Activated T-helper 2 cell treated with anti-CD3 and anti-CD28 coated beads, Interferon-gamma antibody, Interleukin-2, Interleukin-4, amounts not matched to agents 10 μg/mL and 5 μg/mL and 100 μg/mL, durations not matched to agents 14 hours and 24 hours and 36 hours (primary cell): ENCODE measurements at regions of chr10 and their contacts with region 1.

Region 1: DNA sequence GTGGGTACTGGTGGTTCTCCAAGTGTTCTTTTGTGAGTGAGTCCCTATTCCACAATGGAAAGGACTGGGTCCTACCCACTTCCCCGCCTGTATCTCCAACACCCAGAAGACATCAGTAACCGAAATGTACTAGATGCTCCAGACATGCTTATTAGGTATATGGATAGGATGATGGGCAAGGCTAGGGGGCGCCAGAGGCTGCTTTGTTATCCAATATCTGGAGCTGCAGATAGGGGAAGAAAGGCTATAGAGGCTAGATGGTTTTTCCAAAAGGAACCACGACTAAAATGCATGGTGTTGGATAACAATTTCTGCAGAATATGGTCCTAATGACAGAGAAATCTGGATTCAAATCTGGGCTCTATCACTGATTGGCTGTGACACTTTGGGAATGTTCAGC is 56.2 kb upstream of the TM9SF3 start:
- DNase-seq: peak; percentile 46
- H3K4me3 Mint-ChIP-seq: no peak overlapping the region
- H3K27ac Mint-ChIP-seq: no peak overlapping the region
- H3K4me1 Mint-ChIP-seq: peaks cover 19% of the 10 kb centered on the region
- H3K27me3 Mint-ChIP-seq: peaks cover 10% of the 10 kb centered on the region

Region 2: DNA sequence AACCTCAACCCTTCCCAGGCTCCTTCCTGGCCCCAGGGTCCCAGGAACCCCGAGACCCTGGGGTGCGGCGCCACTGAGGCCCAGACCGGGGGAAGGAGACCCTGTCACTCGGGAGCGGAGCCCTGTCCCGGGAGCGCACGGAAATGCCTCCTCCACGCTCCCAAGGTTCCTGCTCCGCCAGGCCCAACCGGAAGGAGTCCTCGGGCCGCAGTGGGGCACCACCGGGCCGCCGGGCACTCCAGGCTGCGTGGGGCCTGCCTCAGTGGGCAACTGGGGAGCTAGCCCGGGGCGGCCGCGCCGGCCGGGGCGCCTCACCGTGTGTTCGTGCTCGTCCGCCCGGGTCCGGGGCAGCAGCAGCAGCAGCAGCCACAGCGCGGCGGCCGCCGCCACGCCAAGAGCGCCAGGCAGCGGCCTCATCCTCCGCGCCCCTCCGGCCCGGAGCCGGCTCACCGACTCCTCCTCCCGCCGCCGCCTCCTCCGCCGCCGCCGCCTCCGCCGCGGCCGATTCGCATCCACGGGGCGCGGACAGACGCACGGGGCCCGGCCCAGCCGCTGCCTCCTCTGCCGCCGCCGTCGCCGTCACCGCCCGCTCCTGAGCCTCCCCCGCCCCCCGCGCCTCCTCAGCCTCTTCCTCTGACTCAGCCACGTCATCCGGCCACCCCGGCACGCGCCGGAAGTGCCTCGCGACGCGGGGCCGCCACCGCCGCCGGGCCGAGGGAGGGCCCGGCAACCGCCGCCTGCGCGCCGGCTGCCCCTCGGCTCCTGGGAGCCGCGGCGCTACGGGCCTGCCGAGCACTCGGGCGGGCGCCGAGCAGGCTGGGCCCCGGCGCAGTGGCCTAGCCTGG is 56.3 kb before region 1 on chr10 and contains the start of gene TM9SF3:
- intact Hi-C with region 1: loop called (anchors 5 kb)
- DNase-seq: peak; percentile 87
- H3K4me3 Mint-ChIP-seq: peak within 1 kb of the TSS; percentile 95
- H3K27ac Mint-ChIP-seq: peak within 1 kb of the TSS; percentile 88
- H3K4me1 Mint-ChIP-seq: peaks cover 29% of the 10 kb centered on the region
- H3K27me3 Mint-ChIP-seq: peaks cover 10% of the 10 kb centered on the region
- total RNA-seq, gene TM9SF3: 81.3 and 82.3 TPM in 2 replicates

Region 3: GRCh38 chr10:96618653-96619052 is 24.3 kb before region 1 on chr10:
- intact Hi-C with region 1: no loop called
- DNase-seq: no peak
- H3K4me3 Mint-ChIP-seq: no peak overlapping the region
- H3K27ac Mint-ChIP-seq: no peak overlapping the region
- H3K4me1 Mint-ChIP-seq: no peaks in the 10 kb centered on the region
- H3K27me3 Mint-ChIP-seq: no peaks in the 10 kb centered on the region

Region 4: DNA sequence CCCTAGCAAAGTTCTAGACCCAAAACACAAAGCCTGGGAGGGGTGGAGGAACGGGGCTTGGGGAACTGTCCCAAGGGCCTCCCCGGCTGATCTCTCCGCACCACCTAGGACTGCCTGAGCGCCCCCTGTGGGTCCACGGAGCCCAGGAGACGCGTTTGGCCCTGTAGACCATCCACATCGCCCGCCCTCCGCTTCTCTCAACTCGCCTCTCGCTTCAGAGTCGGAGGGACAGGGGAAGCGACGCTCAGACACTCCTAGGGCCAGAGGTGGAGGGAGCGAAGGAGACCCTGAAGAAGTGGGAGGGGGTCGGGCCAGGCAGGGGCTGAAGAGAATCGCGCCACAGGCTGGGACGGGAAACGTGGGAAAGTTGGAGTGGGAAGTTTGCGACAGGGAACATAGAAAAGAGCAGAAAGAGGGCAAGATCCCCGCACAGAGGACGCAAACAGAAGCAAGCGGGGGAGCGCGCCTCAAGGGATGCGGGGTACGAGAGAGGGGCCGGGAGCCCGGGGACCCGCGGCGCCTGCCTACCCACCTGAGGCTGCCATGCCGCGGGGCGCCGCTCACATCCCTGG is 77.0 kb after region 1 on chr10:
- intact Hi-C with region 1: loop called (anchors 1 kb)
- DNase-seq: peak; percentile 13
- H3K4me3 Mint-ChIP-seq: peak overlapping the region; percentile 91
- H3K27ac Mint-ChIP-seq: peak overlapping the region; percentile 74
- H3K4me1 Mint-ChIP-seq: peaks cover 30% of the 10 kb centered on the region
- H3K27me3 Mint-ChIP-seq: peaks cover 25% of the 10 kb centered on the region

Region 5: DNA sequence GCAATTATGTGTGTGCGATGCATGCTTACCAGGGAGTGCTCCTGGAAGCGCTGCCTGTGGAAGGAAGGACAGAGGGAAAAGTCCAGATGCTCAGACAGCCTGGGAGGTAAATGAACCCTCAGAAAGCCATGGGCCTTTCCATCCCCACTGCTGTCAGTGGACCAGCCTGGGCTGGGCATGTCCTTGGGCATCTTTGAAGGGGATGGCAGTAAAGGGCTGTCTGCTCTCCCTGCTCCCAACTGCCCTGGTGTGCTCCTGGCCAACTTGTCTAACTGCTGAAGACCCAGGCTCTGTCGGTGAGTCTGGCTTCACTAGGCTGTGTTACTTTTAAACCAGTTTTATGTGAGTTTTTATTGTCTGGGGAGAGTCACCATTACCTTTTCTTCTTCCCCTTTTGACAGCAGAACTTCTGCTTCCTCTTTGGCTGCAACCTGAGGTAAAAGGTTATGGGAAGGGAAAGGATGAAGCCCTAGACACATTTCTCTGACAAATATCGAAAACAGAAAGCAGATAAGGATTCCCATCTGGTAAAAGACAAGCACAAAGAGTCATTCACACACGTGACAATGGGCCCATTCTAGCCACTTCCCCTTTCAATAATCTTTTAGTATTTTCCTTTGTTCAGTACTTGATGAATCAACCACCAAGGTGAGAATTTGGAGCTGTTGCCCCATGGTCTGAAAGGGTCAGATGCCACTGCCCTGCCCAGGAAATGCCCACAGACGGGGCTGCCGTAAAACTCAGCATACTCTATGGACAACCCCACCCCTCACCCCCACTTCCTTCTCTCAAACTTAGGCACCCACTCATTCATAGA is 105.0 kb after region 1 on chr10:
- intact Hi-C with region 1: loop called (anchors 2 kb)
- DNase-seq: peak; percentile 20
- H3K4me3 Mint-ChIP-seq: peak overlapping the region; percentile 26
- H3K27ac Mint-ChIP-seq: peak overlapping the region; percentile 51
- H3K4me1 Mint-ChIP-seq: peaks cover 18% of the 10 kb centered on the region
- H3K27me3 Mint-ChIP-seq: peaks cover 19% of the 10 kb centered on the region

Region 6: GRCh38 chr10:96765406-96766240 is 122.7 kb after region 1 on chr10:
- intact Hi-C with region 1: loop called (anchors 5 kb)
- DNase-seq: peak; percentile 53
- H3K4me3 Mint-ChIP-seq: no peak overlapping the region
- H3K27ac Mint-ChIP-seq: no peak overlapping the region
- H3K4me1 Mint-ChIP-seq: no peaks in the 10 kb centered on the region
- H3K27me3 Mint-ChIP-seq: peaks cover 13% of the 10 kb centered on the region

Region 7: DNA sequence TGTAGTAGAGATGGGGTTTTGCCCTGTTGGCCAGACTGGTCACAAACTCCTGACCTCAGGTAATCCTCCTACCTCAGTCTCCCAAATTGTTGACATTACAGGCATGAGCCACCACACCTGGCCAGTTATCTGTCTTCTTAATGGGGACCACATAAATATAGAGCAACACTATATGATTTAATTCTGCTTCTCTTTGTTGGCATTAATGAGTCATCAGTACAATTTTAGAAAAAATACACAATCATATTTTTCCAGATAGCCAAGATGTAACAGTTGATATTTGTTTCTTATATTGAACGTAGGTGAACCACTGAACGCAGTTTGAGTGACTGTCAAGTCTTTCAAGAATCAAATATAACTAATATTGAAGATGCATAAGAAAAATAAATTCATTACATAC is 237.6 kb after region 1 on chr10:
- intact Hi-C with region 1: no loop called
- DNase-seq: no peak
- H3K4me3 Mint-ChIP-seq: no peak overlapping the region
- H3K27ac Mint-ChIP-seq: no peak overlapping the region
- H3K4me1 Mint-ChIP-seq: peaks cover 6% of the 10 kb centered on the region
- H3K27me3 Mint-ChIP-seq: no peaks in the 10 kb centered on the region

Region 8: DNA sequence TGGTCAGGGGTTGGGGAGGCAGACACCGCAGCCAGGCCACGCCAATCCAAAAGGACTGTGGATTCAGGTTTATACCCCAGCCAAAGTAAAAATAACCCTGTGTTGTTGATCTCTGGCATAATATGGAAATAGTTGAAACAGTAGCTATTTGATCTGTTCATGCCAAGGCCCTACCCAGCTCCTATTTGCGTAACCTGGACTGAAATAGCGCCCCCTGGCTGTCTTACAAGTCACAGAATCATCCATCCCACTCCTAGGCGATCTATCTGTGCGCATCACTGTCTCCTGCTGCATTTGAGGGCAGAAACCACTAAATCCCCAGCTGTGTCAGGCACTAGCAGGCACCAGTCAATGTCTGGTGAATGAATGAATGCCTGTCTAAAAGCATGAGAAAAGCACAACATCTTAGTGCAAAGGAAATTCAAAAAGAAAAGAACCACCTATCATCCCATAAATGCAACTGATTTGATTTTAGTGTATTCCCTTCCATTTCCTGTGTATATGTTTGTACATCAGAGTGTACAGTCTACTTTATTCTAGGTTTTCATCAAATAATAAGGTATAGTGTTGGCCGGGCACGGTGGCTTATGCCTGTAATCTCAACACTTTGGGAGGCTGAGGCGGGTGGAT is 382.8 kb after region 1 on chr10:
- intact Hi-C with region 1: loop called (anchors 5 kb)
- DNase-seq: peak; percentile 48
- H3K4me3 Mint-ChIP-seq: no peak overlapping the region
- H3K27ac Mint-ChIP-seq: no peak overlapping the region
- H3K4me1 Mint-ChIP-seq: peaks cover 6% of the 10 kb centered on the region
- H3K27me3 Mint-ChIP-seq: peaks cover 10% of the 10 kb centered on the region